Naive thymus-derived CD4-positive, alpha-beta T cell (primary cell): ENCODE measurements at regions of chr12 and their contacts with region 1.

Region 1: GRCh38 chr12:27498149-27498548 is 25.9 kb upstream of the PPFIBP1 start:
- DNase-seq: no peak
- ATAC-seq: no peak
- H3K4me3 ChIP-seq: no peak overlapping the region
- H3K4me3 Mint-ChIP-seq: peak overlapping the region in 1 of 10 donors; percentile 26
- H3K27ac ChIP-seq: no peak overlapping the region
- H3K27ac Mint-ChIP-seq: peak overlapping the region in 1 of 9 donors; percentile 67
- H3K4me1 ChIP-seq: no peaks in the 10 kb centered on the region
- H3K4me1 Mint-ChIP-seq: peaks cover 0 to 39% (median 11%) of the 10 kb centered on the region in 7 donors
- H3K27me3 ChIP-seq: no peaks in the 10 kb centered on the region
- H3K27me3 Mint-ChIP-seq: peaks cover 0 to 24% (median 10%) of the 10 kb centered on the region in 5 donors

Region 2: DNA sequence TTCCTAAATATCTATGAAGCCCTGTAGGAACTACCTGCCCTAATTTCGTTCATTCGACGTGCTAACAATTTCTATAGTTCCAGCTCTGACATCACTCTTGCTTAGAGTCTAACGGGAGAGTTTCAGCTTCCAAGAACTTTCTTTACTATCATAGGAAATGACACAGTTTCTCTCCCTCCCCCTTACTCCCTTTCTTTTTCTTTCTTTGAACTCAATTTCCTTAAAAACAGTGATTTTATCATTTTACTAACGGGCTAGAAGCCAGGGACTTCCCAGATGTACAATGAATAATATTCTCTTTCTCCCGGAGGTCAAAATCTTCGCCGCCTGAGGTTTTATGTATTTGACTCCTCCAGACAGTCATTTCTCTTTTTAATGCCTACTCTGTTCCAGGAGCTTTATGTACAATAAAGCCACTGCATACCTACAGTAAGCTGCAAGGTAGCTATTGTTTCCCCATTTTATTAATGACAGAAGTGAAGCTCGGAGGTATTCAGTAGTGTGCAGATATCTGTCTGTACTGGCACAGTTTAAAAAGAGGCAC is 35.9 kb before region 1 on chr12:
- CTCF ChIA-PET with region 1: no interaction called
- POLR2A ChIA-PET with region 1: no interaction called
- intact Hi-C with region 1: loop called in 1 of 2 experiments (anchors 1 kb)
- DNase-seq: no peak
- ATAC-seq: no peak
- H3K4me3 ChIP-seq: no peak overlapping the region
- H3K4me3 Mint-ChIP-seq: peak overlapping the region in 2 of 10 donors; percentile 33 to 67
- H3K27ac ChIP-seq: no peak overlapping the region
- H3K27ac Mint-ChIP-seq: peak overlapping the region in 3 of 9 donors; percentile 2 to 64 (median 6)
- H3K4me1 ChIP-seq: no peaks in the 10 kb centered on the region
- H3K4me1 Mint-ChIP-seq: peaks cover 4 to 55% (median 18%) of the 10 kb centered on the region in 7 donors
- H3K27me3 ChIP-seq: no peaks in the 10 kb centered on the region
- H3K27me3 Mint-ChIP-seq: peaks cover 0 to 19% (median 8%) of the 10 kb centered on the region in 5 donors

Region 3: DNA sequence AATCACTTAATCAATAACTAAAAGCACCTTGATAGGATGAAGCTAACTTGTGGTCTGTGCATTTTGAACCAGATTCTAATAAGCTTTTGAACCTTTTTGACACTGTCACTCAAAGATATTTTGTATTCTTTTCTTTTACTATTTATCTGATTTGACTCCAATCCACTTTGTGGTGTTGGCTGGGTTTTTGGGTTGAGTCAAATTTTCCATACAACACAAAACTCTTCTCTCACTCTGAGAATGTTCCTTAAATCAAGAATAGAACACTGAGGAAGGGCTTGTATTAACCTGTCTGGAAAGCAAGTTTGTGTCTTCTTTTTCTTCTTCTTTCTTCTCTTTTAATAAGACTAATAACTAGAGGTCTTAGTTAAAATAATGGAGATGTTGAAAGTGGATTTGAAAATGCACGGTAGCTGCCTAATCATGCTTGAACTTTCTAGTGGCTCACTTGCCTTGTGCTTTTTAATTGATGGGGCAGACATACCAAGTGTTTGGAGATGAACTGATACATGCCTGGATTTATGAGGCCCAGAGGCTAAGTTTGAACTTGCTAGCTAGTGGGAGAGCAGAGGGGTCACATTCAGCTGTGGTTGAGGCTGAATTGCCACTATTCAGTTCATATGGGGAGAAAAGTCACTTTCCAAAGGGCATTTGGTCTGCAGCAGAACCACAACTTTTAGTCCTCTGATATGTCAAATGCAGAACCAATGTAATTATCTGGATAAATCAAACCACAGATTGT is 567.9 kb after region 1 on chr12:
- CTCF ChIA-PET with region 1: no interaction called
- POLR2A ChIA-PET with region 1: no interaction called
- intact Hi-C with region 1: no loop called
- DNase-seq: no peak
- ATAC-seq: no peak
- H3K4me3 ChIP-seq: no peak overlapping the region
- H3K4me3 Mint-ChIP-seq: no peak overlapping the region
- H3K27ac ChIP-seq: no peak overlapping the region
- H3K27ac Mint-ChIP-seq: no peak overlapping the region
- H3K4me1 ChIP-seq: no peaks in the 10 kb centered on the region
- H3K4me1 Mint-ChIP-seq: no peaks in the 10 kb centered on the region
- H3K27me3 ChIP-seq: no peaks in the 10 kb centered on the region
- H3K27me3 Mint-ChIP-seq: peaks cover 0 to 1% (median 0%) of the 10 kb centered on the region in 5 donors